Posterior vena cava (tissue), 2 donors: ENCODE measurements at regions of chr6 and their contacts with region 1.

Region 1: DNA sequence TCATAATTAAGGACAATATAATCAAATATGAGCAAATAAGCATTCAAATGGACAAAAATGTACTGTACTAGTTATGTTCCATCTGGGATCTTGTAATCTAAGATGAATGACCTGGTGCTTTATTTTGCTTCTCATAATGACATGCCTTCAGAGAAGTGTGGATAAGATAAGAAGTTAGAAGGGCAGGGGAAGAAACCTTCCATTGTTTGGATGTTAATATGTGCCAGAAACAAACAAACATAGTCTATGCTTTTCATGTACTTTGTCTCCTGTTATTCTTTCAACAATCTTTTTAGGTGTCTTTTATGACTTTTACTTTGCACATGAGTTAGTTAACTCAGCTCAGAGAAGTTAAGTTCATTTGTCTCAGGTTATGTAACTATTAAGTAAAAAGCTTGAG is 511.5 kb upstream of the SOX4 start:
- DNase-seq: no peak

Region 2: GRCh38 chr6:20620043-20620442 is 462.0 kb before region 1 on chr6:
- intact Hi-C with region 1: no loop called
- DNase-seq: no peak

Region 3: GRCh38 chr6:21061892-21062291 is 20.2 kb before region 1 on chr6:
- intact Hi-C with region 1: no loop called
- DNase-seq: no peak

Region 4: GRCh38 chr6:21144928-21145327 is 62.8 kb after region 1 on chr6:
- intact Hi-C with region 1: loop called in 1 of 2 experiments (anchors 2 kb)
- DNase-seq: no peak